GM12878 (cell line): ENCODE measurements at regions of chr18 and their contacts with region 1.

Region 1: DNA sequence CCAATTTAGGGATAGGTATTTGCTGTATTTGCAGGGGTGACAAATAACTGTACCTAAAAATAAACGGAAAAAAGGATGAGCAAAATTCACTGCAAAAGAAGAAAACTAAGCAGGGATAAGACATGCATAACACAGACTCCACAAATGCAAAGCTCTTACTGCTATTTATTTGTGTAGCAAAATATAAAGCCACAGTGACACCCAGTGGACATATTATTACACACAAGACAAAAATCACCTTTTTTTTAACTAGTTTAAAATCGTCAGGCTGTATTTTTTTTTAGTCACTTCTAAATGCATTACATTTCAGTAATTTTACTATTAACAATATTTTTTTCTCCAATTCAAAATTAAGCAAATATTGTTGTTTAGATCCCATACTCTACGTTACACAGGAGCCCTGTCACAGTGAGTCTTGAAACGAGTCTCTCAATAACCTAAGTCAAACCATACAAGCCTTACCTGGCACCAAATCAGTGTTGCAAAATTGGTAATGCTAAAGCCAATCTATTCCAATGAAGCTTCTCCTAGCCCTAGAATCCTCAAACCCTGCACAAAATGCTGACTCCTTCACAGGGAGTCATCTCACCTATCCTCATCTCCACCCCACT is 23.7 kb downstream of the METTL4 start:
- DNase-seq: peak; percentile 5
- ATAC-seq: peak; percentile 74
- H3K4me3 ChIP-seq: no peak overlapping the region
- H3K27ac ChIP-seq: no peak overlapping the region
- H3K4me1 ChIP-seq: no peaks in the 10 kb centered on the region
- H3K27me3 ChIP-seq: no peaks in the 10 kb centered on the region
- CTCF ChIP-seq: peak; percentile 25 to 63 (median 49); a peak in 5 of 6 replicates
- EP300 ChIP-seq: no peak
- POLR2A ChIP-seq: no peak
- RAD21 ChIP-seq: peak; percentile 48

Region 2: GRCh38 chr18:864872-865273 is 1682.7 kb before region 1 on chr18:
- CTCF ChIA-PET with region 1: no interaction called
- POLR2A ChIA-PET with region 1: no interaction called
- RAD21 ChIA-PET with region 1: no interaction called
- SMC1A ChIA-PET with region 1: no interaction called
- in situ Hi-C with region 1: loop called (anchors 10 kb)
- intact Hi-C with region 1: loop called (anchors 5 kb)
- DNase-seq: no peak
- ATAC-seq: peak; percentile 92
- H3K4me3 ChIP-seq: no peak overlapping the region
- H3K27ac ChIP-seq: no peak overlapping the region
- H3K4me1 ChIP-seq: no peaks in the 10 kb centered on the region
- H3K27me3 ChIP-seq: no peaks in the 10 kb centered on the region; a peak in 2 of 4 replicates
- CTCF ChIP-seq: peak; percentile 92 to 99 (median 93)
- EP300 ChIP-seq: no peak
- POLR2A ChIP-seq: no peak
- RAD21 ChIP-seq: peak; percentile 92

Region 3: GRCh38 chr18:1663879-1664705 is 883.5 kb before region 1 on chr18:
- CTCF ChIA-PET with region 1: interaction called, 6 read pairs
- POLR2A ChIA-PET with region 1: no interaction called
- RAD21 ChIA-PET with region 1: no interaction called
- SMC1A ChIA-PET with region 1: no interaction called
- in situ Hi-C with region 1: no loop called
- intact Hi-C with region 1: loop called (anchors 10 kb)
- DNase-seq: no peak
- ATAC-seq: peak; percentile 79
- H3K4me3 ChIP-seq: no peak overlapping the region
- H3K27ac ChIP-seq: no peak overlapping the region
- H3K4me1 ChIP-seq: no peaks in the 10 kb centered on the region
- H3K27me3 ChIP-seq: no peaks in the 10 kb centered on the region
- CTCF ChIP-seq: peak; percentile 48 to 76 (median 53)
- EP300 ChIP-seq: no peak
- POLR2A ChIP-seq: no peak
- RAD21 ChIP-seq: peak; percentile 20; the same call in 1 of the 2 replicates

Region 4: GRCh38 chr18:2104620-2105462 is 442.7 kb before region 1 on chr18:
- CTCF ChIA-PET with region 1: interaction called, 124 read pairs
- POLR2A ChIA-PET with region 1: no interaction called
- RAD21 ChIA-PET with region 1: interaction called, 69 read pairs
- SMC1A ChIA-PET with region 1: interaction called, 112 read pairs
- in situ Hi-C with region 1: loop called (anchors 5 kb)
- intact Hi-C with region 1: loop called (anchors 1 kb)
- DNase-seq: no peak
- ATAC-seq: peak; percentile 97
- H3K4me3 ChIP-seq: no peak overlapping the region
- H3K27ac ChIP-seq: no peak overlapping the region
- H3K4me1 ChIP-seq: no peaks in the 10 kb centered on the region
- H3K27me3 ChIP-seq: no peaks in the 10 kb centered on the region
- CTCF ChIP-seq: peak; percentile 67 to 81 (median 70)
- EP300 ChIP-seq: no peak
- POLR2A ChIP-seq: no peak
- RAD21 ChIP-seq: peak; percentile 39

Region 5: GRCh38 chr18:2522112-2522511 is 25.5 kb before region 1 on chr18:
- CTCF ChIA-PET with region 1: interaction called, 11 read pairs
- POLR2A ChIA-PET with region 1: no interaction called
- RAD21 ChIA-PET with region 1: interaction called, 4 read pairs
- SMC1A ChIA-PET with region 1: interaction called, 5 read pairs
- in situ Hi-C with region 1: no loop called
- intact Hi-C with region 1: no loop called
- DNase-seq: peak; percentile 31
- ATAC-seq: peak; percentile 98
- H3K4me3 ChIP-seq: no peak overlapping the region
- H3K27ac ChIP-seq: no peak overlapping the region
- H3K4me1 ChIP-seq: no peaks in the 10 kb centered on the region
- H3K27me3 ChIP-seq: no peaks in the 10 kb centered on the region
- CTCF ChIP-seq: no peak
- EP300 ChIP-seq: no peak; a peak in 1 of 4 replicates
- POLR2A ChIP-seq: no peak
- RAD21 ChIP-seq: no peak

Region 6: DNA sequence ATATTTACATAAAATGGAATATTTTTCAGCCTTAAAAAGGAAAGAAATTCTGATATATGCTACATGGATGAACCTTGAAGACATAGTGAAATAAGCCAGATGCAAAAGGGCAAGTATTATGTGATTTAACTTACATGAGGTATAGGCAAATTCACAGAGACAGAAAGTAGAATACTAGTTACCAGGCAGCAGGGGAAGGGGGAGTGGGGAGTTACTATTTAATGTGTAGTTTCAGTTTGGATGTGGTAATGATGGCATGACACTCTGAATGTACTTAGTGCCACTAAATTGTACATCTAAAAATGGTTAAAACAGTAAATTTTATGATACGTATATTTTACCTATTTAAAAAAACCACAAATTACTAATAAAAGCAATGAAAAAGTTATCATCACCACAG is 11.7 kb after region 1 on chr18:
- CTCF ChIA-PET with region 1: interaction called, 26 read pairs
- POLR2A ChIA-PET with region 1: no interaction called
- RAD21 ChIA-PET with region 1: interaction called, 6 read pairs
- SMC1A ChIA-PET with region 1: interaction called, 6 read pairs
- in situ Hi-C with region 1: no loop called
- intact Hi-C with region 1: no loop called
- DNase-seq: no peak
- ATAC-seq: peak; percentile 51; the same call in 2 of the 3 replicates
- H3K4me3 ChIP-seq: no peak overlapping the region
- H3K27ac ChIP-seq: no peak overlapping the region
- H3K4me1 ChIP-seq: no peaks in the 10 kb centered on the region
- H3K27me3 ChIP-seq: no peaks in the 10 kb centered on the region
- CTCF ChIP-seq: no peak
- EP300 ChIP-seq: no peak
- POLR2A ChIP-seq: no peak
- RAD21 ChIP-seq: no peak